Naive thymus-derived CD4-positive, alpha-beta T cell (primary cell): ENCODE measurements at regions of chr1 and their contacts with region 1.

Region 1: GRCh38 chr1:115138968-115139367 is 49.7 kb upstream of the TSPAN2 start:
- DNase-seq: peak; percentile 25 to 63 (median 49)
- ATAC-seq: peak; percentile 89
- H3K4me3 ChIP-seq: no peak overlapping the region
- H3K4me3 Mint-ChIP-seq: peak overlapping the region; percentile 29 to 79 (median 58)
- H3K27ac ChIP-seq: no peak overlapping the region
- H3K27ac Mint-ChIP-seq: no peak overlapping the region
- H3K4me1 ChIP-seq: peaks cover 0 to 6% of the 10 kb centered on the region in 2 donors
- H3K4me1 Mint-ChIP-seq: peaks cover 0 to 7% (median 4%) of the 10 kb centered on the region in 7 donors
- H3K27me3 ChIP-seq: no peaks in the 10 kb centered on the region
- H3K27me3 Mint-ChIP-seq: peaks cover 5 to 31% (median 21%) of the 10 kb centered on the region in 5 donors

Region 2: DNA sequence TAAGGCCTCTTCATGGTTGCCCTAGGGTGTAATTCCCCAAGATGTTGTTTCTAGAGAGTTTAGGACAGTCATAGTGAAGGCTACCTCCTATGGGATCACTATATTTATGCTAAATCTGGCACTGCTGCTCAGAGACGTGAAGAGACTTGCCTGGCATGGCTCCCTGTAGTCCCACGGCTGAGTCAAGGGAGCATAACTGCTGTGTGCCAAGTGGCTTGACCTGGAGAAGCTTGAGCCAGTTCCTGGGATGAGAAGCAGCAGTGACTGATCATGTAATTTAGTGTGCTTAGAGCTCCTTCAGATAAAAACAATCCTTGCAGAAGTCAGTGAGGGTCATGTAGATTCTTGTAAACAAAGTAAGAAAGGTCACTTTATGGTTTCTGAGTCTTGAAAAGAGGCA is 19.2 kb after region 1 on chr1:
- CTCF ChIA-PET with region 1: no interaction called
- POLR2A ChIA-PET with region 1: no interaction called
- intact Hi-C with region 1: no loop called
- DNase-seq: no peak
- ATAC-seq: no peak
- H3K4me3 ChIP-seq: no peak overlapping the region
- H3K4me3 Mint-ChIP-seq: no peak overlapping the region
- H3K27ac ChIP-seq: no peak overlapping the region
- H3K27ac Mint-ChIP-seq: no peak overlapping the region
- H3K4me1 ChIP-seq: no peaks in the 10 kb centered on the region
- H3K4me1 Mint-ChIP-seq: no peaks in the 10 kb centered on the region
- H3K27me3 ChIP-seq: peaks cover 0 to 4% of the 10 kb centered on the region in 2 donors
- H3K27me3 Mint-ChIP-seq: peaks cover 0 to 13% (median 7%) of the 10 kb centered on the region in 5 donors

Region 3: GRCh38 chr1:115469703-115470476 is 330.9 kb after region 1 on chr1:
- CTCF ChIA-PET with region 1: interaction called, 3 read pairs
- POLR2A ChIA-PET with region 1: no interaction called
- intact Hi-C with region 1: loop called in 1 of 2 experiments (anchors 1 kb)
- DNase-seq: peak in 2 of 9 donors; percentile 11 to 24
- ATAC-seq: peak; percentile 47
- H3K4me3 ChIP-seq: no peak overlapping the region
- H3K4me3 Mint-ChIP-seq: no peak overlapping the region
- H3K27ac ChIP-seq: no peak overlapping the region
- H3K27ac Mint-ChIP-seq: no peak overlapping the region
- H3K4me1 ChIP-seq: no peaks in the 10 kb centered on the region
- H3K4me1 Mint-ChIP-seq: peaks cover 0 to 6% (median 2%) of the 10 kb centered on the region in 7 donors
- H3K27me3 ChIP-seq: no peaks in the 10 kb centered on the region
- H3K27me3 Mint-ChIP-seq: peaks cover 0 to 17% (median 9%) of the 10 kb centered on the region in 5 donors

Region 4: DNA sequence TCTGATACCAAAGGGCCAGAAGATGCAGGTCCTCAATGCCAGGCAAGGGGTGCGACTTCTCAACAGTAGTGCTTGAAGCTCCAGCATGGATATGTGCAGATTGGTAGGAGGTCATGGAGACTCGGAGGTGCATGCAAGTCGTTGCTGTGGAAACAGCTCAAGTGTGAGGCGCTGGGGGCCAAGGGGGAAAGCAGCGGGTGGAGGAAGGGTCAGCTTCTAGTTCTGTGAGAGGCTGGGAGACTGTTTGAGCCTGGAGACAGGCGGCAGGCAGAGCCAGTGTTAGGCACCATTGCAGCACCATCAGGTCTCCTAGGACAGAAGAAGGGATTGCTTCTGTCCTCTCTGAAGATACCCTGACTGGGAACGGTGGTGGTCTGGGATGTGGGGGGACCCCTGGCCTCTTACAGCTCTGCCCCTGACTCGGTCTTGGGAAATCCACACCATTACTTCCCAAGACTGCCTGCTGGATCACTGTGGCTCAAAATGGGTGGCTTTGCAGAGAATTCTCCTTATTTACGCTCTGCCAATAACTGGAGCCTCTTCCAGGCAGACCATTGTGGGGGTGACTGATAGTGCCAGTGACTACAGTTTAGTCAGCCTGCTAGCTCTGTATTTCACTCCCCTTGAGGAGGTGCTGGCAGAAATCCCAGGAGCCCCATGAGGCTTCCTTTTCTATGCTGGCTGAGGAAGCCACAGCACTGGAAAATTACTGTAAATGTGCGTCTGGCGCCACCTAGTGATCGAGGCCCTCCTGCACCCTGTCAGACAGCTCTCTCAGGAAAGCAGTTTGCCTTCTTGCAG is 456.5 kb after region 1 on chr1:
- CTCF ChIA-PET with region 1: interaction called, 8 read pairs
- POLR2A ChIA-PET with region 1: no interaction called
- intact Hi-C with region 1: loop called in 1 of 2 experiments (anchors 1 kb)
- DNase-seq: peak in 8 of 9 donors; percentile 13 to 67 (median 30)
- ATAC-seq: peak; percentile 54
- H3K4me3 ChIP-seq: no peak overlapping the region
- H3K4me3 Mint-ChIP-seq: no peak overlapping the region
- H3K27ac ChIP-seq: no peak overlapping the region
- H3K27ac Mint-ChIP-seq: no peak overlapping the region
- H3K4me1 ChIP-seq: no peaks in the 10 kb centered on the region
- H3K4me1 Mint-ChIP-seq: peaks cover 0 to 3% (median 0%) of the 10 kb centered on the region in 7 donors
- H3K27me3 ChIP-seq: no peaks in the 10 kb centered on the region
- H3K27me3 Mint-ChIP-seq: peaks cover 0 to 28% (median 4%) of the 10 kb centered on the region in 5 donors

Region 5: GRCh38 chr1:115771847-115772457 is 633.0 kb after region 1 on chr1:
- CTCF ChIA-PET with region 1: interaction called, 3 read pairs
- POLR2A ChIA-PET with region 1: no interaction called
- intact Hi-C with region 1: loop called in 1 of 2 experiments (anchors 2 kb)
- DNase-seq: peak in 1 of 9 donors; percentile 21
- ATAC-seq: peak; percentile 60
- H3K4me3 ChIP-seq: no peak overlapping the region
- H3K4me3 Mint-ChIP-seq: no peak overlapping the region
- H3K27ac ChIP-seq: no peak overlapping the region
- H3K27ac Mint-ChIP-seq: no peak overlapping the region
- H3K4me1 ChIP-seq: no peaks in the 10 kb centered on the region
- H3K4me1 Mint-ChIP-seq: no peaks in the 10 kb centered on the region
- H3K27me3 ChIP-seq: no peaks in the 10 kb centered on the region
- H3K27me3 Mint-ChIP-seq: peaks cover 6 to 49% (median 21%) of the 10 kb centered on the region in 5 donors